ENCODE measurements at regions of chr11 and their contacts with region 1.

Region 1: DNA sequence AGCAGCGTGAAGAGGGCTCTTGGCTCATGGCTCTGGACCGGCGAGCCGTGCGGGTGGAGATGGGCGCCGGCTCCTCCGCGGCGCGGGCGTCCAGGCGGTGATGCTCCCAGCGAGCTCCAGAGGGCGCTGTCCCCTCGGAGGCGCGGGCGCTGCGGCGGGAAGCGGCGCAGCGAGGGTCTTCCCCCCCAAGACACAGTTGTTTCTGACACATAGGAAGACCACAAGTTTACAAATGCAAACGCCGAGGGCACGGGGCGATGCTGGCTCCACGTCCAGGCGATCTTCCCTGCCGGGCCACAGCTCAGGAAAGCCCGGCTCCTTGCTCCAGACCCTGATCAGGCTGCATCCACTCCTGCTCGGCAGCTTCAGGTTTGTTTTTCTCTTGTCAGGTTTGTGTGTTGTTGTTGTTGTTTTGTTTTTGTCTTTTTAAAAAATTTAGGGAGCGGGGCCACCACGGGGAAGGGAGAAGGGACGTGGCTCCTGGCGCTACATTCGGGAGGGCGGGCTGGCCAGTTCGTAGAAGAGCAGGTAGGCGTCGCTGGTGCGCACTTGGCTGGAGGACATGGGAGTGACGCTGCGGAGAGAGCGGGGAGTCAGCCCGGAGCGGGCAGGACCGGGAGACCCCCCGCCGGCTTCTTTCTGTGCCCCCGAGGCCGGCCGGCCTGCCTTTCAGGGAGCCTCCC is 10.0 kb upstream of the MFRP start:
- DNase-seq: peak; percentile 93
- H3K4me3 ChIP-seq: peak overlapping the region; percentile 46 to 78 (median 58)
- H3K27ac ChIP-seq: peak overlapping the region in 1 of 8 donors; percentile 36
- H3K4me1 ChIP-seq: peaks cover 0 to 25% (median 13%) of the 10 kb centered on the region in 6 donors
- H3K27me3 ChIP-seq: peaks cover 0 to 57% (median 0%) of the 10 kb centered on the region in 7 donors
- CTCF ChIP-seq: peak; percentile 53 to 97 (median 94)
- POLR2A ChIP-seq: no peak

Region 2: DNA sequence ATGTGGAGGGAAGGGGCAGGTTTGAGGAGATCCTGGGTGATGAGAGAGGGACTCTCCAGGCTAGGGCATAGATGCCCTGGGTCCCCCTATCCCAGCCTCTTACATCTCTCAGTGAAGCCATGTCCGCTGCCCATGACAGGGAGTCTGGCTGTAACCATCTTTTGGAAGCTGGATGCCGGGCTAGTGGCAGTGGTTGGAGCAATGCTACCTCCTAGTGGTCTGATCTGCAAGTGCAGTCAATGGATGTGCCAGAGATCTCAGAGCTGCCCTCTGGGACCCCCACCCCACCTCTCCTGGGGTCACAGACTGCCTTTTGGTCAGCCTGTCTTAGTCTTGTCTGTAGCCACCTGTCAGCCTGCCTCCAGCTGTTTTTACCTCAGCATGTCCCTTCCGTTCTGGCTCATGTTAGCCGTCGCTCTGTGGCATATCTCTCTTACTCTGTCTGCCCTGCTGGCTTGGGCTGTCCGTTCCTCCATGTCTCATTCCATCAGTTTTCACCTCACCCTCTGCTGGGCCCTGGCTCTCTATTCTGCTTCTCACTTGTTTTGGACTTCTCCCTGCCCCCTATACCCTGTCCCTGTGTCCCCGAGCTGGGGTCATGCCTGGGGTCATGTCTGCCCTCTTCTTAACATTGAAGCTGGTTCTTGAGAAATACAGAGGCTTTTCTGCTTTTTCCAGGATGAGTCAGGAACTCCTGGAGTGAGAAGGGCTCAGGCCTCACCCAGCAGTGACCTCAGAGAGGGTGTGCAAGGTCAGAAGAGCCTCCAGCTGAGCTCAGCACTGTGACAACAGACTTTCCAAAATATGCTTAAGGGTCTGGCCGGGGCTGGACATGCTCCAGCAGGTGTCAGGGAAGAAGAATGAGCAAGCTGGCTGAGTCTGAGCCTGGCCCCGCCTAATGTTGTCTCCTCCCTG is 118.4 kb after region 1 on chr11:
- intact Hi-C with region 1: loop called (anchors 5 kb)
- DNase-seq: no peak
- H3K4me3 ChIP-seq: no peak overlapping the region
- H3K27ac ChIP-seq: no peak overlapping the region
- H3K4me1 ChIP-seq: peaks cover 0 to 8% (median 0%) of the 10 kb centered on the region in 6 donors
- H3K27me3 ChIP-seq: peaks cover 0 to 52% (median 0%) of the 10 kb centered on the region in 7 donors
- CTCF ChIP-seq: peak; percentile 45 to 87 (median 77)
- POLR2A ChIP-seq: no peak

Region 3: GRCh38 chr11:119752345-119752871 is 395.9 kb after region 1 on chr11:
- intact Hi-C with region 1: no loop called
- DNase-seq: peak; percentile 44
- H3K4me3 ChIP-seq: no peak overlapping the region
- H3K27ac ChIP-seq: no peak overlapping the region
- H3K4me1 ChIP-seq: peaks cover 0 to 29% (median 11%) of the 10 kb centered on the region in 6 donors
- H3K27me3 ChIP-seq: peaks cover 0 to 63% (median 0%) of the 10 kb centered on the region in 7 donors
- CTCF ChIP-seq: no peak
- POLR2A ChIP-seq: no peak

Measured in spleen (tissue), 13 donors.